B cell (primary cell): ENCODE measurements at regions of chr3 and their contacts with region 1.

Region 1: DNA sequence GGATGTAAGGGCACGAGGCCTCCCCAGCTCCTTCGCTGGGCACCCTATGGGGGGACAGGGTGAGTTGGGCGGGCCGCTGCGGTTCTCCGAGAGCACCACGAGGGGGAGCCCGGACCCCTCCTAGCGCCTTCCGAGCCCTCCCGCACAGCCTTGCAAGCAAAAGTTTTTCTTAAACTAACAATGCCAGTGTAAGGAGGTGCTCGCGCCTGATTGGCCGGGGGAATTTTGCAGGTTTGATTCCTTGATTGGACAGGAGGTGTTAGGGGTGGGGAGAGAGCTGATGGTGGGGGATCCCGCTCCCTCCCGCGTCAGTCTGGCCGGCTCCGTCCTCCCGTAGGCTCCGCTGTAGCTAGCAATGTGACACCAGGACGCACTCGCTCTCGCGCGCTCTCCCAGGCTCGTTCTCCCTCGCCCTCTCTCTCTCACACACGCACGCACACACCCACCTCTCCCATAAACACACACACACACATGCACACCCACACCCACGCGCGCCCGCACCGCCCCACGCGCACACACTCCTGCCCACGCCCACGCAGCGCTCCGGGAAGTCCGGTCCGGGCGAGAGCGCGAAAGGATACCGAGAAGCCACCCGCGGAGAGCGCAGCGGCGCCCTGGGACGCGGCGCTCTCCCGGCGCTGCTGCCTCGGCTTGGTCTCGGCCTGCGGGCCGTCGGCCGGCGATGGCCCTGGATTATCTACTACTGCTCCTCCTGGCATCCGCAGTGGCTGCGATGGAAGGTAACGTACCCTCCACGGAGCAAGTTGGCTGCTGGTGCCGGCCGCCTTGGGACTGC is at the start of gene EPHB1:
- DNase-seq: peak; percentile 80
- ATAC-seq: peak; percentile 81
- H3K4me3 ChIP-seq: peak within 1 kb of the TSS; percentile 17 to 55 (median 37)
- H3K4me3 Mint-ChIP-seq: peak within 1 kb of the TSS; percentile 97
- H3K27ac ChIP-seq: no peak within 1 kb of the TSS
- H3K27ac Mint-ChIP-seq: no peak within 1 kb of the TSS
- H3K4me1 ChIP-seq: peaks cover 14 to 16% of the 10 kb centered on the region in 2 donors
- H3K4me1 Mint-ChIP-seq: peaks cover 12% of the 10 kb centered on the region
- H3K27me3 ChIP-seq: peaks cover 0 to 44% (median 8%) of the 10 kb centered on the region in 4 experiments
- H3K27me3 Mint-ChIP-seq: peaks cover 44% of the 10 kb centered on the region
- CTCF ChIP-seq: peak; percentile 83
- total RNA-seq, gene EPHB1: 0.87 TPM in 1 of 2 replicates, not detected in the other

Region 2: DNA sequence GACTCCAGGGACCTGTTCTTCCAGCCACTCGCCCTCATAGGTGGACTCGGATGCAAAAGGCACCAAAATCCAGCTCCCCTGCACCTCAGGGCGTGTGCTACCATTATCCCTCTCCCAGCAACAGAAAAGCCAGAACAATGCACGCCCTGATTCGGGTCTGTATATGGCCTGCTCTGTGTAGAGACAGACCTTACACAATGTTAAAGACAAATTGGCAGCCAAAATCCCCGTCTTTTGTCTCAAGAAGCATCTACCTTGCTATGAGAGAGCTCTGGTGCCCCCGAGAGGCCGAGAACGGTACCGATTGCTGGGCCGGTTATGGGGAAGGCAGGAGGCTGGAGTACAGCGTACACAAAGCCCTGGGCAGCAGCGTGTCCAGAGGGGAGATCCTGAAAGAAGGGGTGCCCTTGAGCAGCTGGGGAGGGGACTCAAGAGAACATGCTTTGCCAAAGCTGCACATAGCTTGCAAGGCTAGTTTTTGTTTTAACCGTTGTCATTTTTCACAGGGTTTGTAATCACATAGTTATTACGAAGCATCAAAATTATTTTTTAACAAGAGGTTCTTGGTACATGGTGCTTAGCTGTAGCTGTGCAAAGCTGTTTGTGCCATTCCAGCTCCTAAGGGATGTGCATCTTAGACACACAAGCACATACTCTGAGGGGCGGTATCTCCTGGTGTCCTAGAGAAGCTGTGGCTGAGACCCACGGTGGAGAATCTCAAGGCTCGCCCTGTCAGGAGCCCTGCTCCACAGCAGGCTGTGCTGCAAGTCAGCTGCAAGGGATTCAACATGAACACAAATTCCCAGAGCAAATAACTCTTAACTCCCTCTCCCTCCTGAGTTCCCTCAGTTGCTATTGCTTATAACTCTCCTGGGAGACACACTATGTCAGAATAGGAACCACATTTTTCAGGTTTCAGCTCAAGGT is 708.9 kb after region 1 on chr3:
- CTCF ChIA-PET with region 1: interaction called, 61 read pairs
- POLR2A ChIA-PET with region 1: no interaction called
- intact Hi-C with region 1: no loop called
- DNase-seq: peak; percentile 55
- ATAC-seq: peak; percentile 33
- H3K4me3 ChIP-seq: no peak overlapping the region
- H3K4me3 Mint-ChIP-seq: peak overlapping the region; percentile 0
- H3K27ac ChIP-seq: no peak overlapping the region
- H3K27ac Mint-ChIP-seq: no peak overlapping the region
- H3K4me1 ChIP-seq: peaks cover 4% of the 10 kb centered on the region in 2 donors
- H3K4me1 Mint-ChIP-seq: peaks cover 16% of the 10 kb centered on the region
- H3K27me3 ChIP-seq: no peaks in the 10 kb centered on the region
- H3K27me3 Mint-ChIP-seq: peaks cover 7% of the 10 kb centered on the region
- CTCF ChIP-seq: peak; percentile 51

Region 3: DNA sequence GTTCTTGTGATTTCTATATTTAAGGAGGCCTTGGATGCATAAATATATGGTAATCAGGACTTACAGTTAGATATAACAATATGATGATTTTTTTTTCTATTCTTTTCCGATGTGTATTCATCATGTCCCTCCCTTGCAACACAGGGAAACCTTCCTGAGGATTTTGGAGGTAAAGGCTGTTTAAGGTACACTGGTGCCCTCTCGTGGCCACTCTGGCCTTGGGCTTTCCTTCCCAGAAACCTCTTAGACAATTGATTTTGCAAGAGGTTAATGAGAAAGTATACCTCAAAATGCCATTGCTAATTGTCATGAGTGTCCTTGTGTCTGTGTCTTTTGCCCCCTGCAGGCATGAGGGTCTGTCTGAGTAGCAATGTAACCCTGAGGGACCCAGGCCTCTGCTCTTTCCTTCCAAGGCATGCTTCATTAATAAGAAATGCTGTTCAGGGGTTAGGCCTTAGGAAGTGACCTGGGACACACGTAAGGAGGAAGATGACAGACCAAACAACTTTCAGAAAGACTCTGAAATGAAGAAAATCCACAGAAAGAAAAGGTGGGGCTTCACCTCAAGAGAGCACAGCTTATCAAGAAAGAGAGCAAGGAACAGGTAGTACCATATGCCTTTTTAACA is 1100.1 kb after region 1 on chr3:
- CTCF ChIA-PET with region 1: interaction called, 27 read pairs
- POLR2A ChIA-PET with region 1: no interaction called
- intact Hi-C with region 1: no loop called
- DNase-seq: peak; percentile 56
- ATAC-seq: no peak
- H3K4me3 ChIP-seq: no peak overlapping the region
- H3K4me3 Mint-ChIP-seq: no peak overlapping the region
- H3K27ac ChIP-seq: no peak overlapping the region
- H3K27ac Mint-ChIP-seq: no peak overlapping the region
- H3K4me1 ChIP-seq: no peaks in the 10 kb centered on the region
- H3K4me1 Mint-ChIP-seq: no peaks in the 10 kb centered on the region
- H3K27me3 ChIP-seq: no peaks in the 10 kb centered on the region
- H3K27me3 Mint-ChIP-seq: peaks cover 12% of the 10 kb centered on the region
- CTCF ChIP-seq: peak; percentile 79